ENCODE measurements at regions of chr4 and their contacts with region 1.

Region 1: DNA sequence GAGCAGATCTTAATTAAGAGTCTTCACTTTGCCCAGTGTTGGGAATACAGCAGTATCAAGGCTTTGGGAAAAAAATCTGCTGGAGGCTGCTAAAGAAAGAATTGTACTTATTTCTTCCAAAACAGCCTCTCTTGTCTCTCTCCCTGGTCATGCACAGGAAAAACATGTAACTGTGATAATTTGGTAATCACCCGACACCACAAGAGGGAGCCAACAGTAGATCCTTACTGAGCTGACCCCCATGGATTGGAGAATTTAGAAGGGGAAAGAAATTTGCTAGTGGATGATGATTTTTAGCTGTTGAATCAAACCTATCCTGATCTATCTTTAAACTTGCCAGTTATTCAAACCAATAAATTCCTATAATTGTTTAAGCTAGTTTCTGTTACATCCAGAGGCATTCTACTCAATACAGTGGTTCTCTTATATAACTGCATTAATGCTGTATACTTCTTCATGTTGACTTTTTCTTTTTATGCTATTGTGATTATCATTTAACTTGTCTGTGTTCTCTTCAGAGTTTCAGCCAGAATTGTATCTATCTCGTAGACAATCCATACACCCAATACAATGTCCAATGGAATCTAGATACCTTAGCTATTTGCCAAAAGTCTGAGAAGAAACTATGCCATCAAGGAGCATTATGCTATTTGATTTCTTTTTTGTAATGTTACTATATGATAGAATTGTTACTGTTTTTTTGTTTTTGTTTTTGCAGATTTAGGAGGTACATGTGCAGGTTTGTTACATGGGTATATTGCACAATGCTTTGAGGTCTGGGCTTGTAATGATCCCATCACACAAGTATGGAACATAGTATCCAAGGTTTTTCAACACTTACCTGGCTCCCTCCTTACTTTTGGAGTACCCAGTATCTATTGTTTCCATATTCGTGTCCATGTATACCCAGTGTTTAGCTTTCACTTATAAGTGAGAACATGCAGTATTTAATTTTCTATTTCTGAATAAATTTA is 31.3 kb upstream of the ARHGEF38 start:
- DNase-seq: peak; percentile 66
- H3K4me3 Mint-ChIP-seq: no peak overlapping the region
- H3K27ac Mint-ChIP-seq: no peak overlapping the region
- H3K4me1 Mint-ChIP-seq: peaks cover 8% of the 10 kb centered on the region
- H3K27me3 Mint-ChIP-seq: no peaks in the 10 kb centered on the region
- CTCF ChIP-seq: peak; percentile 65

Region 2: DNA sequence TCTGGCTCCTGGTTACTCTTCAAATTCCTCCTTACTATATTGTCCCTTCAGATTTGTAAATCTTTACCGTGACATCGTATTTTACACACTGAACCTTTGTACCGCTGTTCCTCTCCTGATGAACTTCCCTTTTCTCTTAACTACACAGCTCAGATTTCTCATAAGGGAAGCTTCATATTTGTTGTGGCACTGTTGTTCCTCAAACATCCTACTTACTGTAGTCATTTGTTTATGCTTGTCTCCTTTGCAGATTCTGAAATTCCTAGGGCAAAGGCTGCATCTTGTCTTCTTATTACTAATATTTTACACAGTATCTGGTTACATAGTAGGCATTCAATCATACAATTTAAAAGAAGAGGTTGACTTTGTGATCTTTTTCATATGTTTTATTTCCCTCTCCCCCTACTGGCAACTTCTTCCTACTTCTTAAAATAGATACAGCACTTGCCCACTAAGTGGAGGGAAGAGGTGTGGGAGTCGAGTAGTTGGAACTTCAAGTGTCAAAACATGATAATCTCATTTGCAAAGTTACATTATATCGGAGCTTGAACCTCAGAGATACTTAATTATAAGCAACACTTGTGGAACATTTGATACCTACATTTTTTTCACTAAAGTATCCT is 324.5 kb before region 1 on chr4:
- CTCF ChIA-PET with region 1: no interaction called
- POLR2A ChIA-PET with region 1: no interaction called
- intact Hi-C with region 1: no loop called
- DNase-seq: peak; percentile 30
- H3K4me3 Mint-ChIP-seq: no peak overlapping the region
- H3K27ac Mint-ChIP-seq: no peak overlapping the region
- H3K4me1 Mint-ChIP-seq: peaks cover 32% of the 10 kb centered on the region
- H3K27me3 Mint-ChIP-seq: no peaks in the 10 kb centered on the region
- CTCF ChIP-seq: no peak

Region 3: GRCh38 chr4:105551965-105552746 is 31.1 kb after region 1 on chr4 and contains the start of gene ARHGEF38:
- CTCF ChIA-PET with region 1: interaction called, 13 read pairs
- POLR2A ChIA-PET with region 1: no interaction called
- intact Hi-C with region 1: no loop called
- DNase-seq: peak; percentile 18
- H3K4me3 Mint-ChIP-seq: peak within 1 kb of the TSS; percentile 3
- H3K27ac Mint-ChIP-seq: no peak within 1 kb of the TSS
- H3K4me1 Mint-ChIP-seq: peaks cover 12% of the 10 kb centered on the region
- H3K27me3 Mint-ChIP-seq: no peaks in the 10 kb centered on the region
- CTCF ChIP-seq: no peak
- total RNA-seq, gene ARHGEF38: not detected in 2 replicates

Region 4: GRCh38 chr4:105666693-105667092 is 145.6 kb after region 1 on chr4:
- CTCF ChIA-PET with region 1: interaction called, 55 read pairs
- POLR2A ChIA-PET with region 1: interaction called, 4 read pairs
- intact Hi-C with region 1: loop called (anchors 1 kb)
- DNase-seq: peak; percentile 51
- H3K4me3 Mint-ChIP-seq: no peak overlapping the region
- H3K27ac Mint-ChIP-seq: no peak overlapping the region
- H3K4me1 Mint-ChIP-seq: no peaks in the 10 kb centered on the region
- H3K27me3 Mint-ChIP-seq: no peaks in the 10 kb centered on the region
- CTCF ChIP-seq: peak; percentile 25

Region 5: GRCh38 chr4:105715692-105716278 is 194.7 kb after region 1 on chr4:
- CTCF ChIA-PET with region 1: interaction called, 19 read pairs
- POLR2A ChIA-PET with region 1: interaction called, 7 read pairs
- intact Hi-C with region 1: loop called (anchors 1 kb)
- DNase-seq: peak; percentile 55
- H3K4me3 Mint-ChIP-seq: no peak overlapping the region
- H3K27ac Mint-ChIP-seq: peak overlapping the region; percentile 90
- H3K4me1 Mint-ChIP-seq: peaks cover 12% of the 10 kb centered on the region
- H3K27me3 Mint-ChIP-seq: no peaks in the 10 kb centered on the region
- CTCF ChIP-seq: no peak